ENCODE measurements at regions of chr12 and their contacts with region 1.

Region 1: GRCh38 chr12:32302218-32303173 is 96.9 kb upstream of the FGD4 start:
- DNase-seq: peak; percentile 53
- ATAC-seq: peak; percentile 98
- H3K4me3 ChIP-seq: no peak overlapping the region
- H3K27ac ChIP-seq: no peak overlapping the region
- H3K4me1 ChIP-seq: no peaks in the 10 kb centered on the region
- H3K27me3 ChIP-seq: no peaks in the 10 kb centered on the region
- CTCF ChIP-seq: peak; percentile 76
- EP300 ChIP-seq: no peak
- POLR2A ChIP-seq: no peak
- RAD21 ChIP-seq: peak; percentile 66

Region 2: DNA sequence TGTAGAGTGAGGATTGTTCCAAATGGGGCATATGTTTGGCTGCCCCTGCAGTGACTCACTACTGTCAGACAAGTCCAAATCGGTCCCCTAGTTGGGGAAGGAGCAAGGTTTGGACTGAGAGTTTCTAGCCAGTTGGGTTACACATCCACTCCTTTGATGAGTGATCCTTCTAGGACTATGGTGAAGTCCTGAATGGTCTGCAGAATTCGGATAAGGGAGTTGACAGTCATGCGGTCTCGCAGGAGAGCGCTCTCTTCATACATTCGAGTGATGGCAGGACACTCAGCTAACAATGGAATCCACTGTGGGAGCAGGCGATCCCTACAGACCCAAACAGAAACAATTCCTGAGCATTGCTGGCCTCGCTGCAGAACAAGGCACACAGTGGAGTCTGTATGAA is 915.0 kb before region 1 on chr12:
- CTCF ChIA-PET with region 1: no interaction called
- POLR2A ChIA-PET with region 1: no interaction called
- in situ Hi-C with region 1: loop called (anchors 25 kb)
- intact Hi-C with region 1: no loop called
- DNase-seq: no peak
- ATAC-seq: no peak
- H3K4me3 ChIP-seq: no peak overlapping the region
- H3K27ac ChIP-seq: no peak overlapping the region
- H3K4me1 ChIP-seq: no peaks in the 10 kb centered on the region
- H3K27me3 ChIP-seq: no peaks in the 10 kb centered on the region
- CTCF ChIP-seq: no peak
- EP300 ChIP-seq: no peak
- POLR2A ChIP-seq: no peak
- RAD21 ChIP-seq: no peak

Region 3: DNA sequence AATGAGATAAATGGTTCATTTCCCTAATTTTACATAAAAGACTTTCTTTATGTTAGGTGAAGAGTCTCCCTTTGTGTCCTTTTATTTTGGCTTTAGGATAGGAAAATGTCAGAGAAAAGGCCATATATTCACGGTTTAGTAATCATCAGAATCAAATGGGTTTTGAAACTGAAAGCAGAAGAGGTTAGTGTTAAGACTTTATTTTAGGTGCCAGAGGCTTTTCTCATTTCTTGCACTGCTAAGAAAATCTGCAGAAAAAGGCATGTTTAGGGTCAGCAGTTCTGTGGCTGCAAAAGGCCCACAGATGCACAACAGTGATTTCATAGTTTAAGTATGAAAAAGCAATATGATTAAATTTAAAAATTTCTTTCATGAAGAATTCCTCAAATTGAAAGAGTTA is 896.2 kb before region 1 on chr12:
- CTCF ChIA-PET with region 1: no interaction called
- POLR2A ChIA-PET with region 1: no interaction called
- in situ Hi-C with region 1: no loop called
- intact Hi-C with region 1: loop called (anchors 10 kb)
- DNase-seq: no peak
- ATAC-seq: no peak
- H3K4me3 ChIP-seq: no peak overlapping the region
- H3K27ac ChIP-seq: no peak overlapping the region
- H3K4me1 ChIP-seq: no peaks in the 10 kb centered on the region
- H3K27me3 ChIP-seq: no peaks in the 10 kb centered on the region
- CTCF ChIP-seq: no peak
- EP300 ChIP-seq: no peak
- POLR2A ChIP-seq: no peak
- RAD21 ChIP-seq: no peak

Region 4: DNA sequence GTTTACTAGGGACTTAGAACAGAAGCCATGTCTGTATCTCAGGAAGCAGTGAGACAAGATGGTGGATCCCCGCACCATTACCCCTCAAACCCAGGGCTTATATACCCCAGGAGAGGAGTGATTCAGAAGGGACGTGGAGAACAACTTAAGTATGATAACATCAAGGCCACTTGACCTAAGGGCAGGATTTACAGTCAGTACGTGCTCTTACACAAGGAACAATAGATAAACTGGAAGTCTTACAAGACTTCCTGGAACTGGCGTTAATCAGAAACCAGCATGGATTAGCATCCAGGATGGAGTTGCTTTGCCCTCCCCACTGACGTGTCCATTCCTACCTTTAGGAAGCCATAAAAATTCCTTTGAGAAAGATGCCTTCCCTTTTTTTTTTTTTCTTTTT is 651.6 kb before region 1 on chr12:
- CTCF ChIA-PET with region 1: interaction called, 3 read pairs
- POLR2A ChIA-PET with region 1: no interaction called
- in situ Hi-C with region 1: loop called (anchors 10 kb)
- intact Hi-C with region 1: loop called (anchors 2 kb)
- DNase-seq: no peak
- ATAC-seq: no peak
- H3K4me3 ChIP-seq: peak overlapping the region in 1 of 3 experiments; percentile 16; a peak in 2 of 6 replicates
- H3K27ac ChIP-seq: no peak overlapping the region
- H3K4me1 ChIP-seq: peaks cover 41% of the 10 kb centered on the region
- H3K27me3 ChIP-seq: no peaks in the 10 kb centered on the region; a peak in 2 of 5 replicates
- CTCF ChIP-seq: no peak
- EP300 ChIP-seq: no peak
- POLR2A ChIP-seq: no peak
- RAD21 ChIP-seq: no peak

Region 5: DNA sequence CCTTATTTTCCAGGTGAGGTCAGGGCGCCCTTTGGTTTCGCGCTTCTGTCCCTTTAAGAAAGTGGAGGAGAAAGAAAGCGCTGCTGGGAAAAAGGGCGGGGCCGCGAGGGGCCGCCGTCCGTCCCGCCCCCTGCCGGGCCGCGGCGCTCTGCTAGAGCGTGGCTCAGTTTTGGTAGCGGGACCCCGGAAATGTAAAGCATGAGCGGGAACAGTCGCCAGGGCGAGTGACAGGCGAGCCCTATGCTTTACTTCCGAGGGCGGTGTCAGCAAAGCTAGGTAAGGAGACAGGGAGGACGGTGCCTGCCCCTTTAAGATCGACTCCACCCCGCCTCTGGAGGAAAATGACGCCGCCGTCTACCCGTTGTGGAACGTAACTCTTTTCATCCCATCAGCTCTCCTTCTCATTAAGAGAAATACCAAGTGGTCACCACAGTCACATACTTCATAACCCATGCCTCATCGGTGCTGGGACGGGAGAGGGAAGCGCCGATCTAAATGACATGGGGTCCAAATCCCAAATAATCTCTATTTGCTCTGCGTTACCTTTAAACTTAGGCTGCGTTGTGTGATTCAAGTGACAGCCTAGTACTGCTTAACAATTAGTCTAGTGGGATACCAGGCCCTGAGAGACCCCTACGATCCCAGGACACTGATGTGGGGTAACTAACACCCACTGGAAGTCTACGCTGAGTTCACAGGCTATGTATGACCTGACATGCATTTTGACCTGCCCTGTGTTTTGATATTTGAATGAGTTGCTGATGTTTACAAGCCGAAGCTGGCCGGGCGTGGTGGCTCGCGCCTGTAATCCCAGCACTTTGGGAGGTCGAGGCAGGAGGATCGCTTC is 643.2 kb before region 1 on chr12 and contains the start of gene ETFBKMT:
- CTCF ChIA-PET with region 1: no interaction called
- POLR2A ChIA-PET with region 1: no interaction called
- in situ Hi-C with region 1: loop called (anchors 10 kb)
- intact Hi-C with region 1: no loop called
- DNase-seq: peak; percentile 90
- ATAC-seq: peak; percentile 98
- H3K4me3 ChIP-seq: peak within 1 kb of the TSS; percentile 76 to 80 (median 78)
- H3K27ac ChIP-seq: peak within 1 kb of the TSS; percentile 87
- H3K4me1 ChIP-seq: peaks cover 21% of the 10 kb centered on the region
- H3K27me3 ChIP-seq: peaks cover 0 to 8% of the 10 kb centered on the region in 2 experiments; a peak in 2 of 5 replicates
- CTCF ChIP-seq: peak; percentile 55
- EP300 ChIP-seq: no peak
- POLR2A ChIP-seq: peak; percentile 43 to 52; a peak in 2 of 4 replicates
- RAD21 ChIP-seq: peak; percentile 57; the same call in 1 of the 2 replicates
- total RNA-seq, gene ETFBKMT: 0.93 and 1.1 TPM in 2 replicates

Region 6: DNA sequence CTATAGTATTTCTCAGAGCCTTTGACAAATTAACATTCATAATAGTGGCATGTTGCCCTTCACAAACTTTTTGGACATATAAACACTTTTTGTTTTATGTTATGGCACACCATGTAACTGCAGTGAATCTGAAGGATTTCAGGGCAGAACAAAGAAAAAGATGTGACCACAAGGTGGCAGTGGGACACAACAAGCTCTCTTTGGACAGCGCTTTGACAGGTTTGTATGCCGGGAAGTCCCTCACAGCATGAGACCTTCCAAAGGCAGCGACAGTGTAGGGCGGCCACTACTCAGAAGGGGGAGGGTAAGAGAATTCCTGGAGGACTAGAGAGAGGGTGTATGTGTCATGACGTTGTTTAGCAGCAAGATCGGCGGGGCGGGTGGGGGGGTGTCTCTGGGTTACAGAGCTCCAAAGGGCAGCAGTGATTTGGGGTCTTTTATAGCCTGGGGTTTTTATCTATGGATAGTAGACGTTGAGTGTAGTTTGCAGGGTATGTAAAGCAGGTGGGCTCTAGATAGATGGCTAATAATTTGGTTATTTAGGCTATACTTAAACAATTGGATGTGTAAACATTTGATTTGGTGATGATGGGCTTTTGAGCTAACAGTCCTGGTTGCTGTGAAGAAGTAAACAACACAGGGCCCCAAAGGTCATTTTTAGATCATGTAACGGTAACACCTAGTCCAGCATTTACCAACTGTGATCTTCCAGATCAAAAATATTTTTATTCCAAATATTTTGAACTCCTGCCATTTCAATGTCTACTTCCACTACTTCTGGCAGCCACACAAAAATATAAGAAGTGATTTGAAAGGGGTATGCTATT is 620.1 kb before region 1 on chr12:
- CTCF ChIA-PET with region 1: interaction called, 7 read pairs
- POLR2A ChIA-PET with region 1: no interaction called
- in situ Hi-C with region 1: no loop called
- intact Hi-C with region 1: loop called (anchors 1 kb)
- DNase-seq: peak; percentile 81
- ATAC-seq: peak; percentile 92
- H3K4me3 ChIP-seq: no peak overlapping the region
- H3K27ac ChIP-seq: no peak overlapping the region
- H3K4me1 ChIP-seq: no peaks in the 10 kb centered on the region
- H3K27me3 ChIP-seq: no peaks in the 10 kb centered on the region
- CTCF ChIP-seq: peak; percentile 90
- EP300 ChIP-seq: no peak
- POLR2A ChIP-seq: no peak
- RAD21 ChIP-seq: peak; percentile 95

Region 7: GRCh38 chr12:32062881-32063280 is 239.6 kb before region 1 on chr12:
- CTCF ChIA-PET with region 1: interaction called, 5 read pairs
- POLR2A ChIA-PET with region 1: no interaction called
- in situ Hi-C with region 1: loop called (anchors 10 kb)
- intact Hi-C with region 1: loop called (anchors 1 kb)
- DNase-seq: no peak
- ATAC-seq: no peak
- H3K4me3 ChIP-seq: no peak overlapping the region
- H3K27ac ChIP-seq: no peak overlapping the region
- H3K4me1 ChIP-seq: no peaks in the 10 kb centered on the region
- H3K27me3 ChIP-seq: no peaks in the 10 kb centered on the region
- CTCF ChIP-seq: no peak
- EP300 ChIP-seq: no peak
- POLR2A ChIP-seq: no peak
- RAD21 ChIP-seq: no peak

Measured in HepG2 (cell line).